ENCODE measurements at regions of chrX and their contacts with region 1.

Region 1: DNA sequence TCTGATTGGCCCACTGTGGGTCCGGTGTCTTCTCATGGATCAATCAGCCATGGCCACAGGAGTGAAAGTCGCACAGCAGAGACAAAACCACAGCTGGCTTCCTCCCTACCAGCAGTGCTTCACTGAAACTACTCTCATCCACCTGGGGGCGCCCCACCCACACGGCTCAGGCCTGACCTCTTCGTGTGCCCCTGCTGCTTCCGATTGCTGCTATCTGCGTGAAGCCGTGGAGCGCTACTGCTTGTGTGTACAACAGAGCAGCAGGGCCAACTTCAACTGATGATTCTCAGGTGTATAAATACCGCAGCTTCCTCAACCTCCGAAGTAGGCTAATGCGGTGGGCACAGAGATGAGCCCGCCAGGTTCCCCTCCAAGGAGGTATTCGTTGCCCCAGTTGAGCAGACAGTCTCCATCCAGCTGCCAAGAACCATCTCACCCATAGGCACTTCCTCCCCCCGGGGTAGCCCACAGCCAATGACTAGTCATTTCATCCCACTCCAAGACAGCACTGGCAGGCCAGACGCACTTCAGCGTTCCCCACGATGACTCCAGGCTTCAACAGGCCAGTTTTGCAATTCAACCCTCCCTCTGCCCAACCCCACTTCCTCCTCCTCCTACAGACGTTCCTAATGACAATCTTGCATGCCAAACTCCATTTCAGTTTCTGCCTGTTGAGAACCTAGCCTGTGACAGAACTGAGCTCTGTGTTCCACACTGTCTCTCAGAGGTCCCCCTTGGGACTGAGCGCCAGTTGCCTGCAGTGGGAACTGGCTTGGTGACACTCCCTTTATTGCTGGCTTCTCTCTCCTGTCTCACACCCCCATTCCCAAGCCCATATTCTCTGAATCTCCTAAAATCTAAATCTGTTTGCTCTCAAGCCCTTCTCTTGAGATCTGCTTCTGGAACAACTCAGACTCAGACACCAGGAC is 41.3 kb upstream of the ATP6AP2 start:
- DNase-seq: peak in 1 of 10 donors; percentile 12
- H3K4me3 ChIP-seq: no peak overlapping the region
- H3K27ac ChIP-seq: no peak overlapping the region
- H3K27me3 ChIP-seq: peaks cover 0 to 95% (median 41%) of the 10 kb centered on the region in 45 donors
- CTCF ChIP-seq: no peak

Region 2: GRCh38 chrX:40792433-40792832 is 253.0 kb after region 1 on chrX:
- intact Hi-C with region 1: loop called in 1 of 2 experiments (anchors 10 kb)
- DNase-seq: no peak
- H3K4me3 ChIP-seq: no peak overlapping the region
- H3K27ac ChIP-seq: no peak overlapping the region
- H3K27me3 ChIP-seq: peaks cover 0 to 76% (median 22%) of the 10 kb centered on the region in 45 donors
- CTCF ChIP-seq: no peak